GM10248 (cell line): ENCODE measurements at regions of chr14 and their contacts with region 1.

Region 1: DNA sequence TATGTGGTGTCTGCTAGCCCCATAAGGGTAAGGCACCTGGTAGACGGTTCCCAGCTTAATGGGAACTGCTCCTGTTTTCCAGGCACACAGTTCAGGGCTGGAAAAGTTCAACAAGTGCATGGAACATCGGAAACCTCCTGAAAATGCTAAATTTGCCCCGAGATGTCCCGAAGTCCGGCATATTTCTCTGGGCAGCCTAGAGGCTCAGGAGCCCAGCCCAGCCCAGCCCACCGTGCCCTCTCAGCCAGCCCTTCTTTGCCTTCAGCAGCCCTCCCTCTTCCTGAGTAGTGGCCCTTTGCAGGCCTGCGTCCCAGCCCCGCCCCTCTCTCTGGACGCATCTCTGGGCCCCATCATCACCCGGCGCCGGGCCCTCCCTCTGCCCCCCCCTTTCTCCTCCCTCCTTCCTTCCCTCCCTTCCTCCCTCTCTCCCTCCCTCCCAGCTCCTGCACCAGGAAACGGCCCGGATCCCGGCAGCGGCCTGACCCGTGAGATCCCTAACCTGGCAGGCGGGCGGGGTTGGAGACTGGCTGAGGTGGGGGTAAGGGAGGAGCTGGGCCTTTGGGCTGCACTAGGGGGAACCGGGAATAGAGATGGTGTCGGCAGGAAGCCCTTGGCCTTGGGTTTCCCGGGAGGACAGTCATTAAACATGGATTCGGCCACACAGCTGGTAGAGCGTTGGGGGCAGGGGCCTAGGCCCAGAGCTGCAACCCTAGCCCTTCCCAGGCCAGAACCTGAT is at the start of gene BCL2L2:
- DNase-seq: peak; percentile 84
- CTCF ChIP-seq: no peak

Region 2: DNA sequence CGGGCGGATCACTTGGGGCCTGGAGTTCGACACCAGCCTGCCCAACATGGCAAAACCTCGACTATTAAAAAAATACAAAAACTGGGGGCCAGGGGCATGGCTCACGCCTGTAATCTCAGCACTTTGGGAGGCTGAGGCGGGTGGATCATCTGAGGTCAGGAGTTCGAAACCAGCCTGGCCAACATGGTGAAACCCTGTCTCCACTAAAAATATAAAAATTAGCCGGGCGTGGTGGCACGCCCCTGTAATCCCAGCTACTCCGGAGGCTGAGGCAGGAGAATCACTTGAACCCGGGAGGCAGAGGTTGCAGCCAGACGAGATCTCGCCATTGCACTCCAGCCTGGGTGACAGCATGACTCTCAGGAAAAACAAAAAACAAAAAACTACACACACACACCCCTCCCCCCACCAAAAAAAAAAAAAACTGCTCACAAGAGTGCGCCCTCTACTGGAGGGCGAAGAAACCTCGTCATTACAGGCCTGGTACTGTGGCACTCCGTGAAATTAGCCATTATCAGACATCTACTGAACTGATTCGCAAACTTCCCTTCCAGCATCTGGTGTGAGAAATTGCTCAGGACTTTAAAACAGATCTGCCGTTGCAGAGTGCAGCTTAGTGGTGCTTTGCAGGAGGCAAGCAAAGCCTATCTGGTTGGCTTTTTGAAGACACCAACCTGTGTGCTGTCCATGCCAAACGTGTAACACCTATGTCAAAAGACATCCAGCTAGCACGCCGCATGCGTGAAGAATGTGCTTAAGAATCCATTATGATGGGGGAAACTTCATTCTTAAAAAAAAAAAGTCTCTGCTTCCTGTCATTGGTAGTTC is 11.6 kb before region 1 on chr14:
- CTCF ChIA-PET with region 1: interaction called, 45 read pairs
- POLR2A ChIA-PET with region 1: no interaction called
- DNase-seq: no peak
- CTCF ChIP-seq: peak; percentile 76